ENCODE measurements at regions of chr15 and their contacts with region 1.

Region 1: DNA sequence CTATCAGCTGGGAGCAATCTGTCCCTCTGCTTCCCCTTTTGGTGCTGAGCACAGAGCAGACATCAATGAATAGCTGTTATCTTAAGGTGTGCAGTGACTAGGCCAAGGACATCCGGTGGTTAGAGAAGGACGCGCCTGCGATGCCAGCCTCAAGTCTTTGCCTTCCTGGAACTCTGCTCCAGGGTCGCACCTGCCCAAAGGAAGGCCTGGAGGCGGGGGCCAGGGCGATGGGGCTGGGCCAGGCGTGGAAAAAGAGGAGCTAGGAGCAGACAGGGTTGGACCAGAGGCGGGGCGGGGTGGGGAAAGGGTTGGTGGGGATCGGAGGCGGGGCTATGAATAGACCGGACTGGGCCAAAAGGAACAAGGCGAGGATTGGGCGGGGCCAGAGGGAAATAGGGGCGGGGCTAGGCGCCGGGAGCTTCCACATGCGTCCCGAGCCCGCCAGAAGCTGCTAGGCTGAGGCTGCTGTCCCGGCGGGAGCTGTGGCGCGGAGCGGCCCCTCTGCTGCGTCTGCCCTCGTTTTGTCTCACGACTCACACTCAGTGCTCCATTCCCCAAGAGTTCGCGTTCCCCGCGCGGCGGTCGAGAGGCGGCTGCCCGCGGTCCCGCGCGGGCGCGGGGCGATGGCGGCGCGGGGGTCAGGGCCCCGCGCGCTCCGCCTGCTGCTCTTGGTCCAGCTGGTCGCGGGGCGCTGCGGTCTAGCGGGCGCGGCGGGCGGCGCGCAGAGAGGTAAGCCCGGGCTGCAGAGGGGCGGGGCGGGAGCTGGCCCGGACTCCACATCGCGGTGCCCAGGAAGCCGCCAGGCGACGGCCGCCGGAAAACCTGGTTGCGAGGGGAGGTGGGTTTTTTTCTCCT is at the start of gene CHRNA5:
- DNase-seq: peak; percentile 46
- H3K4me3 Mint-ChIP-seq: peak within 1 kb of the TSS; percentile 80
- H3K27ac Mint-ChIP-seq: no peak within 1 kb of the TSS
- H3K4me1 Mint-ChIP-seq: peaks cover 24% of the 10 kb centered on the region
- H3K27me3 Mint-ChIP-seq: peaks cover 36% of the 10 kb centered on the region
- total RNA-seq, gene CHRNA5: 1.1 to 1.5 TPM

Region 2: GRCh38 chr15:78506971-78507830 is 58.1 kb before region 1 on chr15 and contains the start of gene HYKK:
- CTCF ChIA-PET with region 1: no interaction called
- intact Hi-C with region 1: loop called (anchors 5 kb)
- DNase-seq: peak; percentile 87
- H3K4me3 Mint-ChIP-seq: peak within 1 kb of the TSS; percentile 75
- H3K27ac Mint-ChIP-seq: no peak within 1 kb of the TSS
- H3K4me1 Mint-ChIP-seq: peaks cover 20% of the 10 kb centered on the region
- H3K27me3 Mint-ChIP-seq: no peaks in the 10 kb centered on the region
- total RNA-seq, gene HYKK: 3.4 to 3.6 TPM

Region 3: GRCh38 chr15:78739996-78740903 is 174.9 kb after region 1 on chr15:
- CTCF ChIA-PET with region 1: no interaction called
- intact Hi-C with region 1: no loop called
- DNase-seq: peak; percentile 79
- H3K4me3 Mint-ChIP-seq: no peak overlapping the region
- H3K27ac Mint-ChIP-seq: no peak overlapping the region
- H3K4me1 Mint-ChIP-seq: peaks cover 2% of the 10 kb centered on the region
- H3K27me3 Mint-ChIP-seq: peaks cover 2% of the 10 kb centered on the region

Region 4: GRCh38 chr15:78979456-78980320 is 414.4 kb after region 1 on chr15:
- CTCF ChIA-PET with region 1: no interaction called
- intact Hi-C with region 1: no loop called
- DNase-seq: peak; percentile 52
- H3K4me3 Mint-ChIP-seq: no peak overlapping the region
- H3K27ac Mint-ChIP-seq: no peak overlapping the region
- H3K4me1 Mint-ChIP-seq: no peaks in the 10 kb centered on the region
- H3K27me3 Mint-ChIP-seq: no peaks in the 10 kb centered on the region